ENCODE measurements at regions of chr6 and their contacts with region 1.

Region 1: DNA sequence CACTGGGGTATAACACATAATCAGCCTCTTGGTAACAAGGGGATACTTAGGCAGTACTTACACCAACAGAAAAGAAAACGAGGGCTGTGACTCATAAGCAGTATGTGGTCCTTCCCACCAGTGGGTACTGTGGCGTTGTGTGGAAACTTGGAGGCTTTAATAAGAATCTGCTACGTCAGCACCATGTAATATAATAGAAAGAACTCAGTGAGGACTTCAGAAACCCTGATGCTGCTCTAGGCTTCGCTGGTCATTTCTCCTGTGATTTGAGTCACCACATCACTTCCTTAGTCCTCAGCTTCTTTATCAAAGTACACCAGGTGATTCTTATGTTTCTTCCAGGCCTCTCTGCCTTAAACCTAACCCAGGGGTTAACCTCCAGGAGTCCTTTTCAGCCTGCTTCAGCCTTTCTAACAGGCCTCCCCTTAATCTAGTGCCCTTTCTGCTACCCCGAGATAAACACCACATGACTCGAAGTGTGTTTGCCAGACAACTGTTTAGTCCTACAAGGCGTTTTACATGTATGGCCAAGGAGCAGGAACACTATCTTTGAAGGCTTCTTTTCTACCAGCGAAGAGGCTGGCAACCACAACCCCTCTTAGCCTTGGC is 68.5 kb downstream of the FYN start:
- DNase-seq: peak; percentile 73 to 88
- ATAC-seq: peak; percentile 76 to 85 (median 85)
- H3K4me3 ChIP-seq: no peak overlapping the region
- H3K4me3 Mint-ChIP-seq: peak overlapping the region; percentile 78
- H3K27ac ChIP-seq: peak overlapping the region; percentile 75
- H3K27ac Mint-ChIP-seq: peak overlapping the region; percentile 94 to 98
- H3K4me1 ChIP-seq: peaks cover 58% of the 10 kb centered on the region
- H3K4me1 Mint-ChIP-seq: peaks cover 80 to 94% of the 10 kb centered on the region in 2 donors
- H3K27me3 ChIP-seq: no peaks in the 10 kb centered on the region
- H3K27me3 Mint-ChIP-seq: no peaks in the 10 kb centered on the region
- CTCF ChIP-seq: no peak

Region 2: DNA sequence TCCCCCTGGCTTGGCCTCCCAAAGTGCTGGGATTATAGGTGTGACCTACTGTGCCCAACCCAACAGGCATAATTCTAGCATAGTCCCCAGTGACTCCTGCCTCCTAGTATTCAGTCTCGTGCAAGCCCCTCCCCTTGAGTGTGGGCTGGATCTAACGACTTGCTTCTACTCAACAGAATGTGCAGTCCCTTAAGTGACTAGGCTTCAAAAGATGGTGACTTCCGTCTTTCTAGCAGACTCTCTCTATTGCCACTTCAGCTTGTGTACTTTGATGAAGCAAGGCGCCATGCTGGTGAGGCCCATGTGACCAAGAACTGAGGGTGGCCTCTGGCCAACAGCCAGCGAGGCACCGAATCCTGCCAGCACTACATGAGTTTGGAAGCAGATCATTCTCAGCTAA is 89.4 kb before region 1 on chr6:
- intact Hi-C with region 1: loop called (anchors 1 kb)
- DNase-seq: peak in 1 of 2 donors; percentile 75
- ATAC-seq: peak in 2 of 3 donors; percentile 19 to 25
- H3K4me3 ChIP-seq: no peak overlapping the region
- H3K4me3 Mint-ChIP-seq: peak overlapping the region; percentile 79
- H3K27ac ChIP-seq: peak overlapping the region; percentile 82
- H3K27ac Mint-ChIP-seq: peak overlapping the region; percentile 98 to 100
- H3K4me1 ChIP-seq: peaks cover 44% of the 10 kb centered on the region
- H3K4me1 Mint-ChIP-seq: peaks cover 74 to 76% of the 10 kb centered on the region in 2 donors
- H3K27me3 ChIP-seq: no peaks in the 10 kb centered on the region
- H3K27me3 Mint-ChIP-seq: no peaks in the 10 kb centered on the region
- CTCF ChIP-seq: no peak

Region 3: DNA sequence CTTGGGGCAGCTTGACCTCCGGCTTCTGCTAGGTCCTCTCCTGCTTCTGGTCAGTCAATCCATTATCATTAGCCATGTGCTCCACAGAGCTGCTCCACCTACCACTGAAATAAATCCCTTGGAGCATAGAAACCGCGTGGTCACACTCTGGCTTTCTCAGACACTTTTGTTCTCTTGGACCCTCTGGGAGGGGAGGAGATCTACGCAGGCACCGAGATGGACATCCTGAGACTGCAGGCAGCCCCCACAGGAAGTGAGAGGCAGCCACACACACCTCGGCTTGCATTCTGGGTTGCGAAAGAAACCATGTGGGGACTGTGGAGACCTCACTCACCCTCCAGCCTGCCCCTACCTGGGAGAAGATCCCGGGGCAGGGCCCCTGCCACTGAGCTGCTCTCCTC is 11.0 kb before region 1 on chr6:
- intact Hi-C with region 1: no loop called
- DNase-seq: peak; percentile 64 to 76
- ATAC-seq: peak; percentile 86 to 90 (median 90)
- H3K4me3 ChIP-seq: peak overlapping the region; percentile 37
- H3K4me3 Mint-ChIP-seq: peak overlapping the region; percentile 95
- H3K27ac ChIP-seq: peak overlapping the region; percentile 59
- H3K27ac Mint-ChIP-seq: no peak overlapping the region
- H3K4me1 ChIP-seq: peaks cover 47% of the 10 kb centered on the region
- H3K4me1 Mint-ChIP-seq: peaks cover 4 to 10% of the 10 kb centered on the region in 2 donors
- H3K27me3 ChIP-seq: no peaks in the 10 kb centered on the region
- H3K27me3 Mint-ChIP-seq: no peaks in the 10 kb centered on the region
- CTCF ChIP-seq: no peak

Region 4: GRCh38 chr6:111823831-111824607 is 19.3 kb after region 1 on chr6:
- intact Hi-C with region 1: loop called (anchors 2 kb)
- DNase-seq: peak in 1 of 2 donors; percentile 74
- ATAC-seq: peak; percentile 77 to 84 (median 78)
- H3K4me3 ChIP-seq: no peak overlapping the region
- H3K4me3 Mint-ChIP-seq: peak overlapping the region; percentile 72
- H3K27ac ChIP-seq: peak overlapping the region; percentile 62
- H3K27ac Mint-ChIP-seq: peak overlapping the region in 1 of 2 donors; percentile 83
- H3K4me1 ChIP-seq: peaks cover 21% of the 10 kb centered on the region
- H3K4me1 Mint-ChIP-seq: peaks cover 63 to 75% of the 10 kb centered on the region in 2 donors
- H3K27me3 ChIP-seq: no peaks in the 10 kb centered on the region
- H3K27me3 Mint-ChIP-seq: no peaks in the 10 kb centered on the region
- CTCF ChIP-seq: no peak

Region 5: GRCh38 chr6:111845441-111845871 is 40.7 kb after region 1 on chr6:
- intact Hi-C with region 1: loop called (anchors 2 kb)
- DNase-seq: no peak
- ATAC-seq: no peak
- H3K4me3 ChIP-seq: no peak overlapping the region
- H3K4me3 Mint-ChIP-seq: no peak overlapping the region
- H3K27ac ChIP-seq: peak overlapping the region; percentile 49
- H3K27ac Mint-ChIP-seq: no peak overlapping the region
- H3K4me1 ChIP-seq: peaks cover 74% of the 10 kb centered on the region
- H3K4me1 Mint-ChIP-seq: peaks cover 17% of the 10 kb centered on the region in 2 donors
- H3K27me3 ChIP-seq: no peaks in the 10 kb centered on the region
- H3K27me3 Mint-ChIP-seq: no peaks in the 10 kb centered on the region
- CTCF ChIP-seq: no peak